Activated T-helper 2 cell treated with anti-CD3 and anti-CD28 coated beads, Interferon-gamma antibody, Interleukin-2, Interleukin-4, amounts not matched to agents 10 μg/mL and 5 μg/mL and 100 μg/mL, durations not matched to agents 14 hours and 24 hours and 36 hours (primary cell): ENCODE measurements at regions of chr1 and their contacts with region 1.

Region 1: GRCh38 chr1:220680085-220680687 is 10.0 kb upstream of the C1orf115 start:
- DNase-seq: no peak
- H3K4me3 Mint-ChIP-seq: no peak overlapping the region
- H3K27ac Mint-ChIP-seq: no peak overlapping the region
- H3K4me1 Mint-ChIP-seq: no peaks in the 10 kb centered on the region
- H3K27me3 Mint-ChIP-seq: no peaks in the 10 kb centered on the region

Region 2: GRCh38 chr1:220733090-220733601 is 53.0 kb after region 1 on chr1:
- intact Hi-C with region 1: loop called (anchors 2 kb)
- DNase-seq: peak; percentile 70
- H3K4me3 Mint-ChIP-seq: no peak overlapping the region
- H3K27ac Mint-ChIP-seq: no peak overlapping the region
- H3K4me1 Mint-ChIP-seq: peaks cover 2% of the 10 kb centered on the region
- H3K27me3 Mint-ChIP-seq: peaks cover 15% of the 10 kb centered on the region